A673 (cell line): ENCODE measurements at regions of chr5 and their contacts with region 1.

Region 1: GRCh38 chr5:165209086-165209727 is 1703.8 kb downstream of the MAT2B start:
- DNase-seq: peak; percentile 33
- H3K4me3 ChIP-seq: no peak overlapping the region
- H3K27ac ChIP-seq: no peak overlapping the region
- H3K4me1 ChIP-seq: no peaks in the 10 kb centered on the region
- H3K27me3 ChIP-seq: no peaks in the 10 kb centered on the region
- CTCF ChIP-seq: peak; percentile 68

Region 2: GRCh38 chr5:164962329-164962961 is 246.8 kb before region 1 on chr5:
- CTCF ChIA-PET with region 1: no interaction called
- POLR2A ChIA-PET with region 1: no interaction called
- intact Hi-C with region 1: loop called (anchors 2 kb)
- DNase-seq: no peak
- H3K4me3 ChIP-seq: no peak overlapping the region
- H3K27ac ChIP-seq: no peak overlapping the region
- H3K4me1 ChIP-seq: no peaks in the 10 kb centered on the region
- H3K27me3 ChIP-seq: peaks cover 5% of the 10 kb centered on the region
- CTCF ChIP-seq: no peak

Region 3: GRCh38 chr5:165029099-165029870 is 179.9 kb before region 1 on chr5:
- CTCF ChIA-PET with region 1: no interaction called
- POLR2A ChIA-PET with region 1: no interaction called
- intact Hi-C with region 1: loop called (anchors 5 kb)
- DNase-seq: peak; percentile 54
- H3K4me3 ChIP-seq: no peak overlapping the region
- H3K27ac ChIP-seq: no peak overlapping the region
- H3K4me1 ChIP-seq: no peaks in the 10 kb centered on the region
- H3K27me3 ChIP-seq: no peaks in the 10 kb centered on the region
- CTCF ChIP-seq: peak; percentile 40

Region 4: GRCh38 chr5:165393839-165394238 is 184.6 kb after region 1 on chr5:
- CTCF ChIA-PET with region 1: no interaction called
- POLR2A ChIA-PET with region 1: no interaction called
- intact Hi-C with region 1: no loop called
- DNase-seq: no peak
- H3K4me3 ChIP-seq: no peak overlapping the region
- H3K27ac ChIP-seq: no peak overlapping the region
- H3K4me1 ChIP-seq: no peaks in the 10 kb centered on the region
- H3K27me3 ChIP-seq: peaks cover 3% of the 10 kb centered on the region
- CTCF ChIP-seq: no peak